ENCODE measurements at regions of chr14 and their contacts with region 1.

Region 1: GRCh38 chr14:89416002-89416995 is 734 bp downstream of the FOXN3 start:
- DNase-seq: peak; percentile 99
- ATAC-seq: peak; percentile 68
- H3K4me3 ChIP-seq: peak overlapping the region; percentile 75 to 94 (median 83)
- H3K4me3 Mint-ChIP-seq: peak overlapping the region; percentile 92
- H3K27ac ChIP-seq: peak overlapping the region; percentile 91 to 94
- H3K27ac Mint-ChIP-seq: peak overlapping the region; percentile 95
- H3K4me1 ChIP-seq: peaks cover 15 to 18% of the 10 kb centered on the region in 2 donors
- H3K4me1 Mint-ChIP-seq: peaks cover 41% of the 10 kb centered on the region
- H3K27me3 ChIP-seq: no peaks in the 10 kb centered on the region
- H3K27me3 Mint-ChIP-seq: no peaks in the 10 kb centered on the region
- CTCF ChIP-seq: no peak

Region 2: DNA sequence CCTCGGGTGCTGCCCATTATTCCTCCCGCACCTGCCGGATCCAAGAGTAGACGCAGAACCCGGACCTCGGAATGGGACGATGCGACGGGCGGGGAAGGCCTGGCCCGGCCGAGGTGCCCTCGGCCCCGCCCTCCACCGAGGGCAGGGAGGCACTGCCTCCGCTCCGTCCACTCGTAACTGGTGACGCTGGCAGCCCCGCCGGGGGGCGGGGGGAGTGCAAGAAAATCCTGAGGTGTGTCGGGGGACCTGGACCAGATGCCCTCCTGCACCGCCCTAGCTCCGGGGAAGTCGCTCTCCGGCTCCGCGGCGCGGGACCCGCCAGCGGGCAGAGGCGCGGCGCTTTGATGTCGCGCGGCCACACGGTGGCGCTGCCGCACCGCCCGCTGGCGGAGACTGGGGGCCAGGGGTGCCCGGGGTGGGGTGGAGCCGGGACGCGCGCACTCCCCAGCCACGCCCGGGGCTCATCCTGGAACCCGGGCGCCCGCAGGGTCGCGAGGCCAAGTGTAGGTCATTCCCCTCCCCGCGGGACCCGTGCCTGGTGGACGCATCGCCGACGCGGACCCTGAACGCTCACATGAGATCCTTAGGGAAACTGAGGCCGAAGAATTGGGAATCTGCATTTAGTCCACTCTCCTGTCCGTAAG is 389.1 kb before region 1 on chr14:
- CTCF ChIA-PET with region 1: interaction called, 3 read pairs
- POLR2A ChIA-PET with region 1: no interaction called
- intact Hi-C with region 1: loop called (anchors 5 kb)
- DNase-seq: peak; percentile 79
- ATAC-seq: peak; percentile 91
- H3K4me3 ChIP-seq: peak overlapping the region; percentile 8 to 74 (median 53)
- H3K4me3 Mint-ChIP-seq: peak overlapping the region; percentile 76
- H3K27ac ChIP-seq: no peak overlapping the region
- H3K27ac Mint-ChIP-seq: no peak overlapping the region
- H3K4me1 ChIP-seq: peaks cover 13% of the 10 kb centered on the region in 2 donors
- H3K4me1 Mint-ChIP-seq: peaks cover 4% of the 10 kb centered on the region
- H3K27me3 ChIP-seq: peaks cover 0 to 52% (median 28%) of the 10 kb centered on the region in 4 experiments
- H3K27me3 Mint-ChIP-seq: peaks cover 66% of the 10 kb centered on the region
- CTCF ChIP-seq: peak; percentile 93

Region 3: GRCh38 chr14:89303457-89304435 is 112.6 kb before region 1 on chr14:
- CTCF ChIA-PET with region 1: interaction called, 7 read pairs
- POLR2A ChIA-PET with region 1: interaction called, 8 read pairs
- intact Hi-C with region 1: loop called (anchors 1 kb)
- DNase-seq: peak; percentile 90
- ATAC-seq: peak; percentile 69
- H3K4me3 ChIP-seq: peak overlapping the region; percentile 26 to 61 (median 47)
- H3K4me3 Mint-ChIP-seq: peak overlapping the region; percentile 95
- H3K27ac ChIP-seq: peak overlapping the region; percentile 93 to 99
- H3K27ac Mint-ChIP-seq: peak overlapping the region; percentile 100
- H3K4me1 ChIP-seq: peaks cover 66 to 75% of the 10 kb centered on the region in 2 donors
- H3K4me1 Mint-ChIP-seq: peaks cover 77% of the 10 kb centered on the region
- H3K27me3 ChIP-seq: no peaks in the 10 kb centered on the region
- H3K27me3 Mint-ChIP-seq: no peaks in the 10 kb centered on the region
- CTCF ChIP-seq: no peak

Region 4: GRCh38 chr14:89384023-89384422 is 32.3 kb before region 1 on chr14:
- CTCF ChIA-PET with region 1: interaction called, 15 read pairs
- POLR2A ChIA-PET with region 1: interaction called, 11 read pairs
- intact Hi-C with region 1: loop called (anchors 1 kb)
- DNase-seq: peak; percentile 95
- ATAC-seq: peak; percentile 96
- H3K4me3 ChIP-seq: peak overlapping the region in 1 of 5 experiments; percentile 35
- H3K4me3 Mint-ChIP-seq: peak overlapping the region; percentile 46
- H3K27ac ChIP-seq: peak overlapping the region; percentile 69 to 72
- H3K27ac Mint-ChIP-seq: peak overlapping the region; percentile 86
- H3K4me1 ChIP-seq: peaks cover 58 to 65% of the 10 kb centered on the region in 2 donors
- H3K4me1 Mint-ChIP-seq: peaks cover 70% of the 10 kb centered on the region
- H3K27me3 ChIP-seq: no peaks in the 10 kb centered on the region
- H3K27me3 Mint-ChIP-seq: no peaks in the 10 kb centered on the region
- CTCF ChIP-seq: no peak

Region 5: DNA sequence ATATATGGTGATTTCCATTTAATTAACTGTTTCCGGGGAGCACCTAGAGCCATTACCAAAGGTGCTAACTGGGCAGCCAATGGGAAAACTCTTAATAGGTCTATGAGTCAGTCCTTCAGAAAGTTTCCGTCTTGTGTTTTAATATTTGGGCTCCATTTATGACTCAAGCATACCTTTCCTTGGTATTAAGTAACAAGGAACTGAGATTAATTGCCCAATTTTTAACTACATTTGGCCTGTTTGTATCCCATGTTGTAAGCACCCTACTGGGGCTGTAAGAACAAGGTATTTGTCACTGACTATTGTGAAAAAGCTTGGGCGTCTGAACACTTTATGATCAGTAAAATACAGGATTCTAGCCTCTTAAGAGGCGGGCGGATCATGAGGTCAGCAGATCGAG is 63.5 kb after region 1 on chr14:
- CTCF ChIA-PET with region 1: no interaction called
- POLR2A ChIA-PET with region 1: no interaction called
- intact Hi-C with region 1: no loop called
- DNase-seq: no peak
- ATAC-seq: no peak
- H3K4me3 ChIP-seq: no peak overlapping the region
- H3K4me3 Mint-ChIP-seq: no peak overlapping the region
- H3K27ac ChIP-seq: no peak overlapping the region
- H3K27ac Mint-ChIP-seq: no peak overlapping the region
- H3K4me1 ChIP-seq: no peaks in the 10 kb centered on the region
- H3K4me1 Mint-ChIP-seq: peaks cover 5% of the 10 kb centered on the region
- H3K27me3 ChIP-seq: no peaks in the 10 kb centered on the region
- H3K27me3 Mint-ChIP-seq: no peaks in the 10 kb centered on the region
- CTCF ChIP-seq: no peak

Region 6: DNA sequence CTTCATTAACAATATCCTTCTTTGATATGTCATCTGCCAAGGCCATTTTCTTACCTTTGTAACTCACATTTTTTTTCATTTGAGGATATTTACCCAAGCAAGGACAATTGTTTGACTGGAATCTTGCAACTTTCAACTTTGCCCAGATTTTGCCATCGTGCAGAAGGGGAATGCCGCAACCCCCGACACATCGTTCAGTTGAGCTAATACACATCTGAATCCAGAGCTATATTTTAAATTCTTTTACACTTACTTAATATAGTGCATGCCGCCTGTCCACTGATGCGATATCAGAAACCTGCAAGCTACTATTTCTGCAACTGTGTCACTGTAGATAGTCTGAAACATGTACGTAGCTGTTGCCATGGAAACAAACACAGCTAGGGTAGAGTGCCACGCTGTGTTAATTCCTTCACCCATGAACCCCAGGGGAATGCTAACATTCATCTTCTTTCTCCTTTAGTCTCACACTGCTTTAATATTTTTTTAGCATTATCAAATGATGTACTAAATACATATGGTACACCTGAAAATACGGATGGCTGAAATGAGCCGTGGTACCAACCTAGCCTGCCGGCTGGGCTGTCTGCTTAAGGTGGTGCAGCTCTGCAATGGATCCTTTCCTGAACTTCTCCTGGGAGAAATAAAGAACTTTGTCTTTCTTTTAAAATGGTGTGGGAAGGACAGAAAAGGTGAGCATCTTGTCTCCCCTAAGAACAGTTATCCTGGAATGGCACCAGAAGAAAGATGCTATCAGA is 77.8 kb after region 1 on chr14:
- CTCF ChIA-PET with region 1: no interaction called
- POLR2A ChIA-PET with region 1: no interaction called
- intact Hi-C with region 1: loop called (anchors 1 kb)
- DNase-seq: peak; percentile 92
- ATAC-seq: peak; percentile 99
- H3K4me3 ChIP-seq: peak overlapping the region in 4 of 5 experiments; percentile 3 to 46 (median 22)
- H3K4me3 Mint-ChIP-seq: peak overlapping the region; percentile 74
- H3K27ac ChIP-seq: peak overlapping the region; percentile 35 to 77
- H3K27ac Mint-ChIP-seq: peak overlapping the region; percentile 76
- H3K4me1 ChIP-seq: peaks cover 20 to 21% of the 10 kb centered on the region in 2 donors
- H3K4me1 Mint-ChIP-seq: peaks cover 29% of the 10 kb centered on the region
- H3K27me3 ChIP-seq: no peaks in the 10 kb centered on the region
- H3K27me3 Mint-ChIP-seq: no peaks in the 10 kb centered on the region
- CTCF ChIP-seq: no peak

Region 7: DNA sequence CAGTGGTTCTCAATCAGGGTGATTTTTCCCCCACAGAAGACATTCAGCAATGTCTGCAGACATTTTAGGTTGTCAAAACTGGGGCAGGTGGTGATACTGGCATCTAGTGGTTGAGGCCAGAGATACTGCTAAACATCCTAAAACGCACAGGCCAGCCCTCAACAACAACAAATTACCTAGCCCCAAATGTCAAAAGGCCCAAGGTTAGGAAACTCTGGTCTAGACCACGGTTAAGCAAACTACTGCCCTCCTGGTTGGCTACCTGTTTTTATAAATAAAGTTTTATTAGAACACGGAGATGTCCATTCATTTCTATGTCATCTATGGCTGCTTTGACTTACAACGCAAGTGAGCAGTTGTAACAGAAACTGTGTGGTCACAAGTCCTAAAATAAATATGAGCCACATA is 351.6 kb after region 1 on chr14:
- CTCF ChIA-PET with region 1: interaction called, 3 read pairs
- POLR2A ChIA-PET with region 1: no interaction called
- intact Hi-C with region 1: loop called (anchors 2 kb)
- DNase-seq: peak; percentile 83
- ATAC-seq: peak; percentile 88
- H3K4me3 ChIP-seq: peak overlapping the region in 1 of 5 experiments; percentile 23
- H3K4me3 Mint-ChIP-seq: peak overlapping the region; percentile 26
- H3K27ac ChIP-seq: peak overlapping the region in 1 of 2 donors; percentile 52
- H3K27ac Mint-ChIP-seq: peak overlapping the region; percentile 54
- H3K4me1 ChIP-seq: peaks cover 17 to 19% of the 10 kb centered on the region in 2 donors
- H3K4me1 Mint-ChIP-seq: peaks cover 29% of the 10 kb centered on the region
- H3K27me3 ChIP-seq: no peaks in the 10 kb centered on the region
- H3K27me3 Mint-ChIP-seq: no peaks in the 10 kb centered on the region
- CTCF ChIP-seq: peak; percentile 82

Region 8: GRCh38 chr14:90319173-90319572 is 902.9 kb after region 1 on chr14:
- CTCF ChIA-PET with region 1: no interaction called
- POLR2A ChIA-PET with region 1: no interaction called
- intact Hi-C with region 1: no loop called
- DNase-seq: no peak
- ATAC-seq: no peak
- H3K4me3 ChIP-seq: no peak overlapping the region
- H3K4me3 Mint-ChIP-seq: no peak overlapping the region
- H3K27ac ChIP-seq: no peak overlapping the region
- H3K27ac Mint-ChIP-seq: no peak overlapping the region
- H3K4me1 ChIP-seq: no peaks in the 10 kb centered on the region
- H3K4me1 Mint-ChIP-seq: peaks cover 8% of the 10 kb centered on the region
- H3K27me3 ChIP-seq: no peaks in the 10 kb centered on the region
- H3K27me3 Mint-ChIP-seq: no peaks in the 10 kb centered on the region
- CTCF ChIP-seq: no peak

Measured in B cell (primary cell).